ENCODE measurements at regions of chr4 and their contacts with region 1.

Region 1: GRCh38 chr4:15238720-15239119 is 189.1 kb upstream of the C1QTNF7 start:
- DNase-seq: peak; percentile 63
- ATAC-seq: peak; percentile 62
- H3K4me3 ChIP-seq: no peak overlapping the region
- H3K27ac ChIP-seq: no peak overlapping the region
- H3K4me1 ChIP-seq: peaks cover 15% of the 10 kb centered on the region
- H3K27me3 ChIP-seq: no peaks in the 10 kb centered on the region
- CTCF ChIP-seq: peak; percentile 89
- POLR2A ChIP-seq: no peak
- RAD21 ChIP-seq: peak; percentile 93

Region 2: DNA sequence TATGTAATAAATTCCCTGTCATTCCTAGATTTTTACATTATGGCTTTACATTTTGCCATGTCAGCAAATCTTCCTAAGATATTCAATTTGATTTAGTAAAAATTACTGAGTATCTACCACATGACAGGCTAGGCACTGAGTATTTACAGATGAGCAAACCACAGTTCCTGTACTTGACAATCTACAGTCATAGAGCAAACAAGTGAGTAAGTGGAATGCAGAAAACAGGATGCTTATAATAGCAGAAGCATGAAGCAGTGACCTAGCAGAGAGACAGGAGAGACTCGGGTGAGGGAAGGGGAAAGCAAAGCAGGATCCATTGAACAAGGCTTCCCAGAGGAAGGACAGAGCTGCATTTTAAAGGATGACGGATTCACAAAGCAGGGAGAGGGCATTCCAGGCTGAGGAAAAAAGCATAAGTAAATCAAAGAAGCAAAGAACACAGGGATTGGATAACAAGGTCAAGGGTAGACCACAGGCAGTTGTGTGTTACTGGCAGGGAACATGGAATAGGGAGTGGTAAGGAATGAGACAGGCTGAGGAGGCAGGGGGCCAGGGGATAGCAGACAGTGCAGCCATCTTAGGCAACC is 64.4 kb after region 1 on chr4:
- CTCF ChIA-PET with region 1: no interaction called
- POLR2A ChIA-PET with region 1: no interaction called
- dilution Hi-C with region 1: no loop called
- in situ Hi-C with region 1: no loop called
- intact Hi-C with region 1: loop called (anchors 1 kb)
- DNase-seq: peak; percentile 80
- ATAC-seq: peak; percentile 90
- H3K4me3 ChIP-seq: no peak overlapping the region
- H3K27ac ChIP-seq: peak overlapping the region; percentile 70
- H3K4me1 ChIP-seq: peaks cover 12% of the 10 kb centered on the region
- H3K27me3 ChIP-seq: peaks cover 4% of the 10 kb centered on the region; the same call in 1 of the 2 replicates
- CTCF ChIP-seq: no peak
- POLR2A ChIP-seq: no peak
- RAD21 ChIP-seq: no peak

Region 3: GRCh38 chr4:15344041-15344440 is 105.3 kb after region 1 on chr4:
- CTCF ChIA-PET with region 1: no interaction called
- POLR2A ChIA-PET with region 1: no interaction called
- dilution Hi-C with region 1: no loop called
- in situ Hi-C with region 1: no loop called
- intact Hi-C with region 1: loop called (anchors 5 kb)
- DNase-seq: peak; percentile 96
- ATAC-seq: peak; percentile 80
- H3K4me3 ChIP-seq: no peak overlapping the region
- H3K27ac ChIP-seq: peak overlapping the region; percentile 33; the same call in 1 of the 2 replicates
- H3K4me1 ChIP-seq: peaks cover 9% of the 10 kb centered on the region
- H3K27me3 ChIP-seq: peaks cover 10% of the 10 kb centered on the region
- CTCF ChIP-seq: no peak
- POLR2A ChIP-seq: no peak
- RAD21 ChIP-seq: no peak

Region 4: GRCh38 chr4:15649914-15650545 is 411.3 kb after region 1 on chr4:
- CTCF ChIA-PET with region 1: no interaction called
- POLR2A ChIA-PET with region 1: no interaction called
- dilution Hi-C with region 1: no loop called
- in situ Hi-C with region 1: no loop called
- intact Hi-C with region 1: loop called (anchors 5 kb)
- DNase-seq: peak; percentile 63
- ATAC-seq: peak; percentile 25; the same call in 1 of the 2 replicates
- H3K4me3 ChIP-seq: no peak overlapping the region
- H3K27ac ChIP-seq: no peak overlapping the region
- H3K4me1 ChIP-seq: no peaks in the 10 kb centered on the region; the same call in 1 of the 2 replicates
- H3K27me3 ChIP-seq: no peaks in the 10 kb centered on the region
- CTCF ChIP-seq: peak; percentile 75
- POLR2A ChIP-seq: no peak
- RAD21 ChIP-seq: peak; percentile 76

Measured in IMR-90 (cell line).